ENCODE measurements at regions of chr2 and their contacts with region 1.

Region 1: DNA sequence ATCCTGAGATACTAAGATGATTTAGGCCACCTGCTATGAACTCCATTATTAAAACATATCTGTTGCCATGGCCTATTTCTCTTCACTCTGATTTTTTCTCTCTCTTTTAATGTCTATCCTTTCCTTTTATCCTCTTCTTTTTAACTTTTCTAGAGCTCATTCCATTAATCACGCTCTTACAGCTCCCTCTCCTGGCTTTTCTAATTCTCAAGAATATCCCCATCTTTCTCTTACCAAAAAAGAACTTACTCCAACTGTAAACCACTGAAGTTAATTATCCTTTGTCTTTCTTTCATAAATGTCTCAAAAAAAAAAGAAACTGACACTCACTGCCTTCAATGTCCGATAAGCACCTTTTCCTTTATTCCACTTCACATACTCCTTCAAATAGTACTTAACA is 7.9 kb downstream of the PPP3R1 start:
- DNase-seq: no peak
- H3K4me3 ChIP-seq: no peak overlapping the region
- H3K27ac ChIP-seq: peak overlapping the region in 1 of 4 donors; percentile 27
- H3K4me1 ChIP-seq: peaks cover 23 to 95% (median 40%) of the 10 kb centered on the region in 3 donors
- H3K27me3 ChIP-seq: no peaks in the 10 kb centered on the region
- CTCF ChIP-seq: no peak
- POLR2A ChIP-seq: no peak

Region 2: GRCh38 chr2:68083346-68083745 is 161.1 kb before region 1 on chr2:
- intact Hi-C with region 1: no loop called
- DNase-seq: no peak
- H3K4me3 ChIP-seq: no peak overlapping the region
- H3K27ac ChIP-seq: no peak overlapping the region
- H3K4me1 ChIP-seq: no peaks in the 10 kb centered on the region
- H3K27me3 ChIP-seq: no peaks in the 10 kb centered on the region
- CTCF ChIP-seq: no peak
- POLR2A ChIP-seq: no peak

Region 3: DNA sequence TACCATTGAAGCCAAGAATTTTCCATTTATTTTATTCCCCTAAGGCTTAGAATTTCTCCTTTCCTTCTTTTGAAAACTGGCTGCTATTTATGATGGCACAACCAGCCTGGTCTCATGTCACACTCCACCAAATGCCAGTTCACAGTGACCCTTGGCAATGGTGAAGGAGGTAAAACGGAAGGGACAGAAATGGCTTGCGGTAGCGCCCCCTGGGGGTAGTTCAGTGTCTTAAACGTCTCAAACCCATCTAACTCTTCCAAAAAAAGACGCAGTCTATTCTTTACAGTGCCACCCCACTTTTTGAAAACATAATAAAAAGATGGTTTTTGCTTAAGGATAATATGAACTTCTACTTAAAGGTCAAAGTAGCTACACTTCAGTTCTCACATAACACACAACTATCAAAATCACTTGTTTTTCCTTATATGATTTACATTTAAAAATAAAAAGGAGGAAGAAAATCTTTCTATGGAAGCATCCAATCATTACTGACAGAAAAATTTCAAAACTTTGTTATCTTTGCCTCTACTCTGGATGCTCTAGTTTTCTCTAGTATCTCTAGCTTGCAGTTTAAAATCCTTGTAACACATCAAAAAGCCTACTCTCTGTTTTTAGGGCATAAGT is 58.8 kb before region 1 on chr2:
- intact Hi-C with region 1: loop called (anchors 10 kb)
- DNase-seq: no peak
- H3K4me3 ChIP-seq: no peak overlapping the region
- H3K27ac ChIP-seq: no peak overlapping the region
- H3K4me1 ChIP-seq: peaks cover 0 to 18% (median 0%) of the 10 kb centered on the region in 3 donors
- H3K27me3 ChIP-seq: no peaks in the 10 kb centered on the region
- CTCF ChIP-seq: peak in 5 of 6 experiments; percentile 33 to 55 (median 48)
- POLR2A ChIP-seq: no peak

Measured in esophagus squamous epithelium (tissue), 5 donors.